Sigmoid colon (tissue), 7 donors: ENCODE measurements at regions of chr15 and their contacts with region 1.

Region 1: GRCh38 chr15:83747050-83747717 is 93.3 kb downstream of the ADAMTSL3 start:
- DNase-seq: peak; percentile 87
- H3K4me3 ChIP-seq: peak overlapping the region in 2 of 4 donors; percentile 13 to 27
- H3K27ac ChIP-seq: peak overlapping the region; percentile 67 to 81 (median 72)
- H3K4me1 ChIP-seq: peaks cover 0 to 22% (median 15%) of the 10 kb centered on the region in 4 donors
- H3K27me3 ChIP-seq: no peaks in the 10 kb centered on the region
- CTCF ChIP-seq: peak; percentile 42 to 54 (median 46)
- EP300 ChIP-seq: no peak
- POLR2A ChIP-seq: no peak

Region 2: GRCh38 chr15:83446904-83447709 is 300.1 kb before region 1 on chr15 and contains the start of gene SH3GL3:
- intact Hi-C with region 1: loop called (anchors 5 kb)
- DNase-seq: peak; percentile 91
- H3K4me3 ChIP-seq: peak within 1 kb of the TSS; percentile 39 to 64 (median 52)
- H3K27ac ChIP-seq: peak within 1 kb of the TSS in 2 of 4 donors; percentile 41 to 57
- H3K4me1 ChIP-seq: peaks cover 0 to 14% (median 8%) of the 10 kb centered on the region in 4 donors
- H3K27me3 ChIP-seq: peaks cover 0 to 6% (median 0%) of the 10 kb centered on the region in 3 donors
- CTCF ChIP-seq: peak in 1 of 4 experiments; percentile 23
- EP300 ChIP-seq: no peak
- POLR2A ChIP-seq: no peak
- total RNA-seq, gene SH3GL3: 0.54 to 0.99 (median 0.71) TPM in 3 of 4 donors, not detected in the other

Region 3: DNA sequence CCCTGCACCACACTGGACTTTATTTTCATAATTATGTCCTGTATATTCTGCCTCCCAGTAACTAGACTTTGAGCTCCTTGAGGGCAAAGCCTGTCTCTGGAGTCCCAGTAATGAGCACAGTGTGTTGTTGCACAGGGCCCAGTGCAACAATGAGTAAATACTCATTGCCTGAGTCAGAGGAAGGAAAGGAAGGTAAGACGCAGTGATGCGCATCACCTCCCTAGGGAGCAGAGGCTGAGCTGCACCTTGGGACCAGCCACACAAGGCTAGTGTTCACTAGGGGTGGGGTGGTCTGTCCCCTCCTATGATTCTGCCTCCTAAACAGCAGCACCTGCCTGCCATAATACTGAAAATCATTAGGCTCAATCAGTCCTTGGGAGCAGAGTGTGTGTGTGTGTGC is 179.9 kb before region 1 on chr15:
- intact Hi-C with region 1: loop called (anchors 2 kb)
- DNase-seq: no peak
- H3K4me3 ChIP-seq: no peak overlapping the region
- H3K27ac ChIP-seq: no peak overlapping the region
- H3K4me1 ChIP-seq: peaks cover 0 to 3% (median 0%) of the 10 kb centered on the region in 4 donors
- H3K27me3 ChIP-seq: no peaks in the 10 kb centered on the region
- CTCF ChIP-seq: no peak
- EP300 ChIP-seq: no peak
- POLR2A ChIP-seq: no peak

Region 4: GRCh38 chr15:83973816-83974215 is 226.6 kb after region 1 on chr15:
- intact Hi-C with region 1: no loop called
- DNase-seq: no peak
- H3K4me3 ChIP-seq: no peak overlapping the region
- H3K27ac ChIP-seq: no peak overlapping the region
- H3K4me1 ChIP-seq: peaks cover 0 to 15% (median 5%) of the 10 kb centered on the region in 4 donors
- H3K27me3 ChIP-seq: no peaks in the 10 kb centered on the region
- CTCF ChIP-seq: peak in 1 of 4 experiments; percentile 7
- EP300 ChIP-seq: no peak
- POLR2A ChIP-seq: no peak